ENCODE measurements at regions of chr3 and their contacts with region 1.

Region 1: DNA sequence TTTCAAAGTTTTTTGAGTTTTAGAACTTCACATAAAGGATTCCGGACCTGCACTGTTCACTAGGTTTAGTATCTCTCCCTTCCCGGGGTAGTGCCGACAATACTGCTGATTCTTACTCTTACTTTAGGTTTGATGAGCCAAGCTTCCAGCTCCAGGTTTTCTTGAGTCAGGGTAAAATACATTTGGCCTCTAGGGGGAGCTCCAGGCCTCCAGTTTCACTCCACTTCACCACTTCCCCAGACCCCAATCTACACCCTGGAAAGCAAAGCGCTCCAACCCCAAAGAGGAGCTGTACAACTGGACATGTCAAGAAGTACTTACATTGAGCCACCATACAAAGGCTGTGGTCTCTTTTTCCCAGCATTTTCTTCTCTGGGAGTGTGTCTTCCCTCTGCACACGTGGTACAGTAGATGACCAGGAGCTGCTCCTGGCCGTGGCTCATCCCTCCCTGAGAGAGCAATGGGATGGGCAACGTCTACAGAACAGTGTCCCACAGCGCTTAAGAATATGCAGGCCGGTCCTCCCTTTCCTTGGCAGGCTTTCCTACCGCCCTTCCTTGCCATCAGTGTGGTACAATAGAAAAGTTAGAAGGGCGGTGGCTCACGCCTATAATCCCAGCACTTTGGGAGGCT is 93.9 kb upstream of the CCDC80 start:
- DNase-seq: peak; percentile 46
- H3K4me3 ChIP-seq: no peak overlapping the region
- H3K27ac ChIP-seq: no peak overlapping the region
- H3K27me3 ChIP-seq: no peaks in the 10 kb centered on the region
- CTCF ChIP-seq: peak; percentile 70

Region 2: GRCh38 chr3:112642912-112643506 is 91.8 kb before region 1 on chr3:
- CTCF ChIA-PET with region 1: interaction called, 39 read pairs
- POLR2A ChIA-PET with region 1: interaction called, 7 read pairs
- DNase-seq: peak; percentile 86
- H3K4me3 ChIP-seq: peak overlapping the region; percentile 28
- H3K27ac ChIP-seq: no peak overlapping the region
- H3K27me3 ChIP-seq: no peaks in the 10 kb centered on the region
- CTCF ChIP-seq: peak; percentile 96

Region 3: DNA sequence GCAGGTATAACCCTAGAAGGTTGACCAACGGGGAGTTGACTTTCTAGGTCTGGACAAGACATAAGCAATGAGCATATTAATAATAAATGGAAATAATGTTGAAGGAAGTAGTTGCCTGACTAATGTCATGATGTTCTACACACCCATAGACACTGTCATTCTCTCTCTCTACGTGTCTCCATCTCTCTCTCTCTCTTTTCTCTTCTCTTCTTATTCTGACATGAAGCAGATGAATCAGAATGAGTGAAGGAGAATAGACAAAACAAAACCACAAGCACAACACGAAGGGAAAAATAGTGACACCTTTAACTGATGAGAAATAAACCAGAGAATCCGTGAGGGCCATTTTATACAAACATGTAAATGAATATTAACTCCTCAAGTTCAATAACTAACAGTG is 67.2 kb before region 1 on chr3:
- CTCF ChIA-PET with region 1: no interaction called
- POLR2A ChIA-PET with region 1: no interaction called
- DNase-seq: no peak
- H3K4me3 ChIP-seq: no peak overlapping the region
- H3K27ac ChIP-seq: no peak overlapping the region
- H3K27me3 ChIP-seq: no peaks in the 10 kb centered on the region
- CTCF ChIP-seq: no peak

Region 4: GRCh38 chr3:112709911-112710310 is 24.9 kb before region 1 on chr3:
- CTCF ChIA-PET with region 1: interaction called, 12 read pairs
- POLR2A ChIA-PET with region 1: no interaction called
- DNase-seq: no peak
- H3K4me3 ChIP-seq: no peak overlapping the region
- H3K27ac ChIP-seq: no peak overlapping the region
- H3K27me3 ChIP-seq: no peaks in the 10 kb centered on the region
- CTCF ChIP-seq: no peak

Region 5: GRCh38 chr3:112751564-112752512 is 17.0 kb after region 1 on chr3:
- CTCF ChIA-PET with region 1: interaction called, 83 read pairs
- POLR2A ChIA-PET with region 1: no interaction called
- DNase-seq: no peak
- H3K4me3 ChIP-seq: no peak overlapping the region
- H3K27ac ChIP-seq: no peak overlapping the region
- H3K27me3 ChIP-seq: no peaks in the 10 kb centered on the region
- CTCF ChIP-seq: no peak

Region 6: DNA sequence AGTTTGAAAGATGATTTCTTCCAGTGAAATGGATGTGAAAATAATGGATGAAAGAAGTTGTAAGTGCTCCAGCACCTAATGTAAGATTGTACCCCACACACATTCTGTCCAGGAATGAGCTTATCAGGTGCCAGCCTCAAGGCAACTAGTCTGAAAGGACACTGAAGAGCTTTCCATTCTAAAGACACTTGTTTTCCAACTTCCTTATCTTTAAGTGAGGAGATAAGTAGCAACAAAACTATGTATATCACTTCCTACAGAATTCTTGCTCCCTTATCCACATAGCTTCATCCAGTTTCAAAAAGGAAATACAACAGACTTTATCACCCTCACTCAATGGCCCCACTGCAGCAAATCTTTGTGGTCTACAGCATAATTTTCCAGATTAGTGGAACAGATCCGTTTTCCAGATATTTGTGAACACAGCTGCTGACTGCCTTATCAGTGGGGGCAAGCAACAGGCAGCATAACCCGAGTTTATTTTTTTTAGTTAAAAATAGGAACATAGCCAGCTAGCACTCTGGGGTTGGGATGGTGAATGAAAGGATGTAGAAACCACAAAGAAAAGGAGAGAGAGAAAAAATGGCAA is 51.3 kb after region 1 on chr3:
- CTCF ChIA-PET with region 1: interaction called, 13 read pairs
- POLR2A ChIA-PET with region 1: no interaction called
- DNase-seq: no peak
- H3K4me3 ChIP-seq: no peak overlapping the region
- H3K27ac ChIP-seq: no peak overlapping the region
- H3K27me3 ChIP-seq: no peaks in the 10 kb centered on the region
- CTCF ChIP-seq: no peak

Region 7: DNA sequence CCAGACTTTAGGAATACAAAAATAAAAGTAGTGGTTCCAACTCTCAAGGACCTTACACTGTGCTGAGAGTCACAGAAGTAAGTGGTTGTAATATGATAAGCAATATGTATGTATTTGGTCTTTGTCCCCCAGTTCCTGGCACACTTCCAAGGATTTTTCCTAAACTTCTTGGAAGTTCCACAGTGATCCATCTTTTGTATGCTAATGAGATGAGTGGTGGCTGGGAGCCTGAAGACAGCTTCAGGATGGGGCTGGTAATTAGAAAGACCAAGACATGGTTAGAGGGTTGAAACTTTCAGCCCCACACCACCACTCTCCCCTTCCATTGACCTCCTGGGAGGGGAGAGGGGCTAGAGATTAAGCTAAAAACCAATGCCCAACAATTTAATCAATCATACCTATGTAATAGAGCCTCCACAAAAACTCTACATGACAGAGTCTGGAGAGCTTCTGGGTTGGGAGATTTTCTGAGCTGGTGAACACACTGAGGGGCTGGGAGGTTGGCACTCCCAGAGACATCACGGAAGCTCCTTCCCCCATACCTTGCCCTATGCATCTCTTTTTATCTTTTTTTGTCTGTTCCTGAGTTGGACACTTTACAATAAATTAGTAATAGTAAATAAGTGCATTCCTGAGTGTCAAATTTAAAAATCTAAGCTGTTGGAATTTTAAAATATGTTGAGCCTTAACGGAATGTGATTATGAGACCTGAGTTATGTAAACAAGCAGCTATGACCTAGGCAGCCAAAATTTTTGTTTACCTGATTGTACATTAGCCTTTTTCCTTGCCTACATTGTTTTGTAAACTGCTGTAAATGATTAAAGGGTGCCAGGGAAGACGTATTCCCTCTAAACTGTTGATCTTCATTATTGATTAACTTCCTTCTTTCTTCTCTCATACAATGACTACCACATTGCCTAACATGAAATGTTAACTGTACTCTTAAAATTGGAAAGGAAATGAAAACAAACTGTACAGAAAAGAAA is 87.5 kb after region 1 on chr3:
- CTCF ChIA-PET with region 1: interaction called, 24 read pairs
- POLR2A ChIA-PET with region 1: no interaction called
- DNase-seq: no peak
- H3K4me3 ChIP-seq: no peak overlapping the region
- H3K27ac ChIP-seq: no peak overlapping the region
- H3K27me3 ChIP-seq: no peaks in the 10 kb centered on the region
- CTCF ChIP-seq: no peak

Region 8: GRCh38 chr3:113008117-113008516 is 273.3 kb after region 1 on chr3:
- CTCF ChIA-PET with region 1: interaction called, 10 read pairs
- POLR2A ChIA-PET with region 1: no interaction called
- DNase-seq: no peak
- H3K4me3 ChIP-seq: no peak overlapping the region
- H3K27ac ChIP-seq: no peak overlapping the region
- H3K27me3 ChIP-seq: no peaks in the 10 kb centered on the region
- CTCF ChIP-seq: no peak

Measured in AG04450 (cell line).